ENCODE measurements at regions of chr7 and their contacts with region 1.

Region 1: DNA sequence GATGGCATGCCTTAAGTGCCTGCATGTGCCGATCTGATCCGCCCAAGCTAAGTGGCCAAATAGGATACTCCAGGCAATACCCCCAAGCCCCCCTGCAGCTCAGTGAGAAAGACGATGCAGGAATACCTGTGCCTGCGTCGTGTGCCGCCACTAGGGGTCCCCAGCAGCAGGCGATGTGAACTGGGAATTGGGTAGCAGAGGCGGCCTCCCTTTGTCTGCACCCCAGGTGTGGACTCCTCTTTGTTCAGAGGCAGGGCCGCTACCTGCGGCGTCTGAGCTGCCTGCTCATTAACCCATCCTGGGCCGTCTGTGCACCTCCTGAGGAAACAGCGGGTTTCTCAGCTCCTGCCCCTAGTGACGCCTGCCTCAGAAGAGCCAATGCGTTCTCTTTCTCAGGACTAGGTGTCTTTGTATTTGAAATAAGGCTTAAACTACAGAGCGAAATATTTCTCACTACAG is 4.8 kb upstream of the CHN2 start:
- DNase-seq: no peak

Region 2: DNA sequence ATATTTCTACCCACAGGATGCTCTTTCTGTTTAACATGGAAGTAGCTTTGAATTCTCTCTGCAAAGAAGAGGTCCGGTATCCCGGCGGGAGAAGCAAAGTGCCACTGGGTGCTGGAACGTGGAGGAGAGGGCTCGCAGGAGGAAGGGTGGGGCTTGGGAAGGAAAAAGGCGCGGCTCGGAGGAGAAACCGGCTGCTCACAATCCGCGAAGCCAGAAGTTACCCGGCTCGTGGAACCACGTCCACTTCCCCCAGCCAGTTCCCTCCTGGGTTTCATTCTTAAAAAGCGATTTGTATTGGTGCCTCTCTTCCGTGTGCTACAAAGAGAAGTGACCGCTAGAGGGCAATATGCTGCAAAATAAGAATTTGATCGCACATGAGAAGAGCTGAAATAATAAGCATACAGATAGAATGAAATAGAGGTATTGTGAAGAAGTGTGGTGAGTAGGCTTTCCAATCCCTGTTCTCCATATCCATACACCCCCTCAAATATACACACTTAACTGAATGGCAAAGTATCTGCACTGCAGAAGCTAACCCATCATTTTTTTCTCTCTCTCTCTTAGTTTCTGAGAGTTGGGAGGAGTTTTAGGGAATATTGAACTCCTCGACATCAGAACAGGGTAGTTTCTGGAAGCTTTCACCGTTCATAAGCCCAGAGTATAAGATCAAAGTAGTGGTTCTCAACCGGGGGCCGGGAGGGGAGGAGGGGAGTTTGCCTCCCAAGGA is 262.7 kb before region 1 on chr7:
- intact Hi-C with region 1: loop called (anchors 10 kb)
- DNase-seq: peak; percentile 82

Region 3: GRCh38 chr7:28984631-28985030 is 205.1 kb before region 1 on chr7:
- intact Hi-C with region 1: no loop called
- DNase-seq: no peak

Region 4: GRCh38 chr7:29035044-29035740 is 154.6 kb before region 1 on chr7:
- intact Hi-C with region 1: no loop called
- DNase-seq: no peak

Region 5: DNA sequence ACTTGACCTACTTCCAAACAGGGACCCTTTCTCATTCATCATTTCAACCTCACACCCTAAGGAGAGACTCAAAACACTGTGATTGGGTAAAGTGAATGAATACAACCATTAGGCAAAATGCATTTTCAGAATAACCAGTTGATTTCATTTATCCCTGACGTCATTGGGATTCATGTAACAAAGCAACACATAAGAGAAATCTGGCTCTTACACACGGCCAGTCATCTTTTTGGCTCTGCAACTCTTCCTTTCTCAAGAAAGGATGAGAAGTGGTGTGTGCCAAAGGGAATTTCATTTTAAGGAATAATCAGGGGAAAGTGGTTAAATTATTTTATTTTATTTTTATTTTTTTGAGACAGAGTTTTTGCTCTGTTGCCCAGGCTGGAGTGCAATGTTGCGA is 126.5 kb before region 1 on chr7:
- intact Hi-C with region 1: no loop called
- DNase-seq: no peak

Region 6: DNA sequence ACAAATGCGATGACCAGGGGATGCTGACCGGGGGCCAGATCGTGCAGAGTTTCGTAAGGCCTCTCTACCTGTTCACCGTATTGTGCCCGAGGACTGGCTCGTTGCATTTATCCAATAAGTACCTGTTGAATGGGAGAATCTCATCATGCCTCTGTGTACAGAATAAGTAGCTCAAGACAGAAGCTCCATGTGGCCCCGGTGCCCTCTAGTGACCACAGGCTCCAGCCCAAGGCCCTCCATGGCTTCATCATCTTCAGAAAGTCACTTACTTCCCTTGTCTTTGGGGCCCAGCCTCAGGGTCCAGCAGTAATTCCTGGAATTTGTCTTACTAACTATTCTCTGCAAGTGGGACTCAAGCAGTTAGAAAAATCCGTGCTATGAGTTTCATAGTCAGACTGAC is 155.8 kb after region 1 on chr7:
- intact Hi-C with region 1: loop called (anchors 5 kb)
- DNase-seq: no peak

Region 7: DNA sequence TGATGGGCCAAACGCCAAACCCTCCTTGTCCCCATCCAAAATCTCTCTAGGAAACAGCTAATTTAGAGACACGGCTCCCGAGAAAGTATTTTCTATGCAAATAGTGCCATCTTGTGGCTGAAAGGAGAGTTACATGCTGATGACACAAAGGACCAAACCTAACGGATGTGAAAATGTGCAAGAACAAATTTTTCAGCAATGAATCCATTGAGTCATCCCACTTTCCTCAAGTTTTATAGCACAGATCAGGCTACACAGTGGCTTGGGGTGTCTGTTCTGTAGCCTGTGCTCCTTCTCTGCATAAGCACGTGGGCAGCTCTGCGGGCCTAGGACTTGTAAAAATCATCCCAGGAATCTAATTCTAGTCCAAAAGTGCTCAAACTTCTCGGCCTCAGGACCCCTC is 219.1 kb after region 1 on chr7:
- intact Hi-C with region 1: loop called (anchors 2 kb)
- DNase-seq: no peak

Region 8: GRCh38 chr7:29609162-29610037 is 419.6 kb after region 1 on chr7:
- intact Hi-C with region 1: loop called (anchors 10 kb)
- DNase-seq: no peak

Measured in cardiac septum (tissue), 1 donor.